ENCODE measurements at regions of chr9 and their contacts with region 1.

Region 1: GRCh38 chr9:70120834-70121510 is 77.3 kb downstream of the MAMDC2 start:
- DNase-seq: no peak
- H3K4me3 ChIP-seq: no peak overlapping the region
- H3K27ac ChIP-seq: no peak overlapping the region
- H3K4me1 ChIP-seq: peaks cover 0 to 8% (median 0%) of the 10 kb centered on the region in 4 experiments; a peak in 2 of 7 replicates
- H3K27me3 ChIP-seq: no peaks in the 10 kb centered on the region
- CTCF ChIP-seq: peak; percentile 9 to 42 (median 32); a peak in 2 of 4 replicates
- EP300 ChIP-seq: no peak
- POLR2A ChIP-seq: no peak
- RAD21 ChIP-seq: peak; percentile 21 to 38; a peak in 3 of 4 replicates

Region 2: DNA sequence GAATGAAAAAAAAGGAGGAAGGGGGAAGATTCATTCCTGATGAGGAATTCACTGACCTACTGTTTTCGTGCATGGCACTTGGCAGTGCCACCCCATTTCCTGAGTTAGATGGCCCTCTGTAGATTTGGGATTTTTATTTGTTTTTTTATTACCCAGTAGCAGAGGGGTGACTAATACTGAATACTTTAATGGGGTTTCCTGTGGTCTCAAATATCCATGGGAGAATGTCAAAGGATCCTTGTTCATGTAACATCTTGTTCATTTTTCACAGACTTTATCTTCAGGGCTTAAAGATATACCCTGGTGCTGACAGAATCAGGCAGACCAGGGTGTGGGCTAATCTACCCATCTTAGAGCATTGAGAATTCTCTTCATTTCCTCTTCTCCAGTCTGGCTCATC is 15.7 kb after region 1 on chr9:
- CTCF ChIA-PET with region 1: interaction called, 11 read pairs
- POLR2A ChIA-PET with region 1: interaction called, 3 read pairs
- DNase-seq: no peak
- H3K4me3 ChIP-seq: no peak overlapping the region
- H3K27ac ChIP-seq: no peak overlapping the region
- H3K4me1 ChIP-seq: no peaks in the 10 kb centered on the region
- H3K27me3 ChIP-seq: no peaks in the 10 kb centered on the region
- CTCF ChIP-seq: no peak
- EP300 ChIP-seq: no peak
- POLR2A ChIP-seq: no peak
- RAD21 ChIP-seq: no peak

Region 3: DNA sequence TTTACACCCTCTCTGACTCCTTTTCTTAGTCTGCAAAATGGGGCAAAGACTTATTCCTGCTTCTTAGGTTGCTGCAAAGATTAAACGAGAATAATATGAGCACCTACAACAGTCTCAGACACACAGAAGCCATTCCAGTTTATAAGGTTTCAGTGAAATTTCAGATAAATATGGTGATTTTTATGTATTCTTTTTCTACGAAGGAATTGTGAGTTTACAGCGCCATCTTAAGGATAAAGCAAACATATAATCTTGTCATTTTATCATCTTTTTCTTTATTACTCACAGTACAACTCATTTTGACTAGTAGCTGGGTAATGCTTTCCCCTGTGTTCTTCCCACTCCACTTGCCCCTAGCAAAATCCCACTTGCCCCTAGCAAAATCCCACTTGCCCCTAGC is 108.6 kb after region 1 on chr9:
- CTCF ChIA-PET with region 1: interaction called, 19 read pairs
- POLR2A ChIA-PET with region 1: no interaction called
- DNase-seq: no peak
- H3K4me3 ChIP-seq: no peak overlapping the region
- H3K27ac ChIP-seq: no peak overlapping the region
- H3K4me1 ChIP-seq: no peaks in the 10 kb centered on the region
- H3K27me3 ChIP-seq: no peaks in the 10 kb centered on the region
- CTCF ChIP-seq: peak in 2 of 3 experiments; percentile 15 to 39; a peak in 2 of 4 replicates
- EP300 ChIP-seq: no peak
- POLR2A ChIP-seq: no peak
- RAD21 ChIP-seq: peak in 1 of 2 experiments; percentile 68